Dorsolateral prefrontal cortex (tissue), 120 donors: ENCODE measurements at regions of chr2 and their contacts with region 1.

Region 1: GRCh38 chr2:218367415-218368153 is 10.9 kb downstream of the CATIP start:
- DNase-seq: peak in 9 of 10 donors; percentile 40 to 85 (median 69)
- H3K4me3 ChIP-seq: peak overlapping the region; percentile 39 to 75 (median 59)
- H3K27ac ChIP-seq: peak overlapping the region in 57 of 59 donors; percentile 23 to 96 (median 80)
- H3K27me3 ChIP-seq: no peaks in the 10 kb centered on the region
- CTCF ChIP-seq: peak in 4 of 56 donors; percentile 4 to 20 (median 12)

Region 2: DNA sequence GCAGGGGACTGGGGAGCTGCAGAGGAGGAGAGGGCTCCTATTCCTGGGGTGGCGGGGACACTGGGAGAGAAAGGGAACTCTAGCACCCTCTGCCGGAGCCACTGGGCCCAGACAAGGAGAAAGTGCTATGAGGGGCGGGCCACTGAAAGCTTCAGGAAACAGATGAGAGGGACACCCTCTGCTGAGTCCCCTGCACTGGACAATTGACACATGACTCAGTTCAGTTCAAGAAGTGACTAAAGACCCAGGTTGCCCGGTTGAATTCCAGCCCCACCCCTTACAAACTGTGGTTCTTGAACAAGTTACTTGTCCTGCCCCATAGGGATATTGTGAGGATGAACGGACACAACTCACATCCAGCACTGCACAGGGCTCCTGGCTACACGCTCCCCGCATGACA is 293.6 kb before region 1 on chr2:
- intact Hi-C with region 1: no loop called
- DNase-seq: no peak
- H3K4me3 ChIP-seq: no peak overlapping the region
- H3K27ac ChIP-seq: no peak overlapping the region
- H3K27me3 ChIP-seq: peaks cover 0 to 5% (median 0%) of the 10 kb centered on the region in 45 donors
- CTCF ChIP-seq: peak in 23 of 56 donors; percentile 12 to 34 (median 21)

Region 3: GRCh38 chr2:218186355-218186766 is 181.2 kb before region 1 on chr2:
- intact Hi-C with region 1: loop called in 1 of 2 experiments (anchors 10 kb)
- DNase-seq: peak in 7 of 10 donors; percentile 17 to 51 (median 38)
- H3K4me3 ChIP-seq: peak overlapping the region in 1 of 59 donors; percentile 21
- H3K27ac ChIP-seq: no peak overlapping the region
- H3K27me3 ChIP-seq: no peaks in the 10 kb centered on the region
- CTCF ChIP-seq: peak; percentile 38 to 84 (median 73)

Region 4: GRCh38 chr2:218284106-218284811 is 83.3 kb before region 1 on chr2:
- intact Hi-C with region 1: no loop called
- DNase-seq: peak in 1 of 10 donors; percentile 34
- H3K4me3 ChIP-seq: no peak overlapping the region
- H3K27ac ChIP-seq: peak overlapping the region in 58 of 59 donors; percentile 31 to 100 (median 97)
- H3K27me3 ChIP-seq: no peaks in the 10 kb centered on the region
- CTCF ChIP-seq: no peak

Region 5: DNA sequence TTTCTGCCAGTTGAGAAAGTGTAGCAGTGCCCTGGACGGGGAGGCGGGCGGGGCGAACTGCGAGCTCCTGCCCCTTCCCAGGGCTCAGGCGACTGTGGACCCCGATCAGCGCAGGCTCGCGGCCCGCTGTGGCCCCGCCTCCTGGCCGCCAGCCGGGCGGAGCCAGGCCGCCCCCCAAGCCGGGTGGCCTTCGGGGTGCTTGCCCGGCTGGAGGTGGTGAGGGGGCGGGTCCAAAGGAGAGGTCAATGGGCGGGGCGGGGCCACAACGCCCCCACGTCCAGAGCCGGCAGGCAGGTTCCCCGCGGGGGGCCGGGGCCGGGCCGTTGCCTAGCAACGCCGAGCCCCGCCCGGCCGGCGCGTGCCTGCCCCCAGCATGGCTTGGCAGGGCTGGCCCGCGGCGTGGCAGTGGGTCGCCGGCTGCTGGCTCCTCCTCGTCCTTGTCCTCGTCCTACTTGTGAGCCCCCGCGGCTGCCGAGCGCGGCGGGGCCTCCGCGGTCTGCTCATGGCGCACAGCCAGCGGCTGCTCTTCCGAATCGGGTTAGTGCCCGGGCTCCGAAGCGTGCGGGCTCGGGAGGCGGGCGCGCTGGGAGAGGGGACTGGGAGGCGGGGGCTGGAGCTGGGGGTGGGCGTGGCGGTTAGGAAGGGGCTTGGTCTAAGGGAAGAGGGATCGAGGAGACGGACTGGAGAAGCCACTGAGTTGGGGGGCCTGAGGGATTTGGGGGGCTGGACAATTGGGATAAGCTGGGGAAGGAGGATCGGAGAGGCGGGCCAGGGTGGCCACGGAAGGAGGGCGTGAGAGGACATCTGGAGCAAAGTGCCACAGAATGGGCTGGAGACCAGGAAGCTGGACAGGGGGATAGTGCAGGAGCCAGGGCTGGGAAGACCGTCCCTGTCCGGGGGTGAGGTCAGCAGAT is 44.4 kb before region 1 on chr2:
- intact Hi-C with region 1: no loop called
- DNase-seq: peak; percentile 40 to 71 (median 56)
- H3K4me3 ChIP-seq: peak overlapping the region; percentile 54 to 88 (median 75)
- H3K27ac ChIP-seq: peak overlapping the region in 51 of 59 donors; percentile 10 to 86 (median 61)
- H3K27me3 ChIP-seq: no peaks in the 10 kb centered on the region
- CTCF ChIP-seq: peak in 2 of 56 donors; percentile 2 to 8

Region 6: GRCh38 chr2:218631837-218632236 is 264.3 kb after region 1 on chr2:
- intact Hi-C with region 1: no loop called
- DNase-seq: no peak
- H3K4me3 ChIP-seq: no peak overlapping the region
- H3K27ac ChIP-seq: no peak overlapping the region
- H3K27me3 ChIP-seq: no peaks in the 10 kb centered on the region
- CTCF ChIP-seq: no peak